ENCODE measurements at regions of chr22 and their contacts with region 1.

Region 1: DNA sequence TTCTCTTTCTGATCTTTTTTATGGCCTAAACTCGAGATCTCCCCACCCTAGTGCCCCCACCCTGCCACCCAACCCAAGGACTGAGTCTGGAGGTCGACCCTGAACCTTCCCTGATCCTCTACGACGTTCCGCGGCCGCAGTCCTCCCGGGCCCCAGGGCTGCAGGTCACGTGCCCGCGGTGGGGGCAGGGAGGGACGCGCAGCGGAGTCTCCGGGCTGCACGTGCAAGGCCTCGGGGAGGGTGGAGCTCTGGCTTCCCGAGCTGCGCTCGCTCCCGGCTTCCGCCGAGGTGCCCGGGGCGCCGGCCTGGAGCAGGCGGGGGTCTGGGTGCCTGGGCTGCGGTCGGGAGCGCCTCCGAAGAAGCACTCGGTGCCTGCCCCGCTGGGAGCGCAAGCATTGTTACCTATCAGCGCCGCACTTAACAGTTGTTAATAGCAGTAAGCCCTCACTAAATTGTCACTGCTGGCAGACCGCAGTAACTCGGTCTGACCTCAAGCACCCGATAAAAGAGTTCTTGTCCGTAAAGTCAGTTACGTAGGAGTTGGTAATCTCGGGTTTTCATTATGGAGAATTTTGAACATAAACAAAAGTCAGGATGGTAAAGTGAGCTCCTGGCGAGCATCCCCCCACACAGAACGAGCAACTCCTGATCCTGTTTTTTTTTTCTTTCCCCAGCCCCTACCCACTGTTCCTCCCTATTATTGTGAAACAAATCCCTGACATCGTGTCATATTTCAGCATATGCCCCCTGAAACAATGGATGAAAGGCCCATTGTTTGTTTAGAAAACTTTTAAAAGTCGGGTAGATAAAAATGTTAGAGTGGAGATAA is 69.7 kb upstream of the EP300 start:
- DNase-seq: peak; percentile 52 to 83
- ATAC-seq: peak; percentile 80 to 86
- H3K4me3 ChIP-seq: peak overlapping the region; percentile 59
- H3K27ac ChIP-seq: peak overlapping the region; percentile 85 to 100
- H3K4me1 ChIP-seq: peaks cover 7% of the 10 kb centered on the region; the same call in 1 of the 3 replicates
- CTCF ChIP-seq: no peak
- EP300 ChIP-seq: no peak; a peak in 1 of 5 replicates
- POLR2A ChIP-seq: 0 out of 2 replicates have a peak, but pooled peaks have one; percentile 4
- RAD21 ChIP-seq: no peak

Region 2: GRCh38 chr22:41038732-41039445 is 16.2 kb after region 1 on chr22:
- CTCF ChIA-PET with region 1: no interaction called
- POLR2A ChIA-PET with region 1: no interaction called
- DNase-seq: no peak
- ATAC-seq: no peak
- H3K4me3 ChIP-seq: no peak overlapping the region
- H3K27ac ChIP-seq: no peak overlapping the region
- H3K4me1 ChIP-seq: no peaks in the 10 kb centered on the region
- CTCF ChIP-seq: no peak
- EP300 ChIP-seq: no peak
- POLR2A ChIP-seq: no peak
- RAD21 ChIP-seq: no peak

Region 3: GRCh38 chr22:41091132-41092022 is 68.7 kb after region 1 on chr22:
- CTCF ChIA-PET with region 1: interaction called, 3 read pairs
- POLR2A ChIA-PET with region 1: interaction called, 26 read pairs
- DNase-seq: peak; percentile 91 to 98
- ATAC-seq: peak; percentile 87 to 92
- H3K4me3 ChIP-seq: peak overlapping the region; percentile 90
- H3K27ac ChIP-seq: peak overlapping the region; percentile 99 to 100
- H3K4me1 ChIP-seq: peaks cover 22% of the 10 kb centered on the region
- CTCF ChIP-seq: no peak
- EP300 ChIP-seq: no peak
- POLR2A ChIP-seq: peak; percentile 76
- RAD21 ChIP-seq: no peak; a peak in 1 of 5 replicates

Measured in A549 (cell line).